Left ventricle myocardium superior (tissue), 1 donor: ENCODE measurements at regions of chr19 and their contacts with region 1.

Region 1: GRCh38 chr19:18214779-18215433 is 11.1 kb upstream of the RAB3A start:
- DNase-seq: no peak
- ATAC-seq: no peak

Region 2: GRCh38 chr19:18017275-18018083 is 197.4 kb before region 1 on chr19:
- intact Hi-C with region 1: no loop called
- DNase-seq: peak; percentile 44
- ATAC-seq: peak; percentile 11

Region 3: DNA sequence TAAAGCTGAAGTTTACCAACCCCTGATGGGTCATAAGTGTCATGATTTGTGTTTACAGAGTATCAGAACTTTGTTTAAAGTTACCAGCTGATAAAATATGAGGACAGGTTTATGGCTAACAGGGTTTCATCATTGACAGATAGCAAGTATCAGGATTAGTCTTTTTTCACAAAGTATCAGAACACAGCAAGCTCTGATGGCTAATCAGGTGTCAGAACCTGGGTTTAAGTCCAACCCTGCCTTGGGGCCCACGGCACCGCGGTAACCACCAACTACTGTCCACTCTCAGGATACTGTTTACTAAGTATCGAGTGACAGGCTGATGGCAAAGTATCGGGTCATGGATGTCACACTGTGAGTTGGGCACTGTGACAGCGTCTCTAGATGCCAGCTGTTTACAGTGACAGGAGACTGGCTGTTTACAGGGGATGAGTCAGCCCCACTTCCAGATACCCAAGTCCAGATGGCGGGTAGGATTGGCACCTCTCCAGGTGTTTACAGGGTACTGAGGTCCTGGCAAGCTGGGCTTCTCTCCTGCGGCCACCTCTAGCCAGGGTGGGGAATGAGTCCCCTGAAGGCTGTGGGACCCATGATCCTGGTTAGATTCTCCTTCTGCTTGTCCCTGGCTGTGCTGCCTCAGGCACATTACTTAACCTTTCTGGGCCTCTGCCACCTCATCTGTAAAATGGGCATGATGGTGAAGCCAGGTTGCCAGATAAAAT is 185.1 kb before region 1 on chr19:
- intact Hi-C with region 1: no loop called
- DNase-seq: no peak
- ATAC-seq: peak; percentile 60

Region 4: GRCh38 chr19:18160971-18161635 is 53.8 kb before region 1 on chr19:
- intact Hi-C with region 1: no loop called
- DNase-seq: peak; percentile 89
- ATAC-seq: peak; percentile 74

Region 5: GRCh38 chr19:18249834-18250233 is 34.9 kb after region 1 on chr19:
- intact Hi-C with region 1: no loop called
- DNase-seq: no peak
- ATAC-seq: no peak

Region 6: DNA sequence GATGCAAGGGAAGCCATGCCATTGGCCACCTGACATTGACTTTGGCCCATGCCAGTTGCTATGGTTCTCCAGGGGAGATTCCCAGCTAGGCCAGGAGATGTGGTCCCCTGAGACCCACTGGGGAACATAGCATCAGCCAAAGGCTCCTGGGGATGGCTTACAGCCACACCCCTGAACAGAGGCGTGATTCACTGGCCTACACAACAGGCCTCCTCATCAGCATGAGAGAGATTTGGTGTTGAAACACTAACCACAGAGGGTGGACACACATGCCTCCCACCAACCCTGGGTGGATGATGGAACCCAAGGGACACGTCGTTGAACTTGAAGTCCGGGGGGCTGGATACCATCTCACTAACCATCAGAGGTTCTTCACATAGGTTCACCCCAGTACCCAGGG is 45.0 kb after region 1 on chr19:
- intact Hi-C with region 1: loop called (anchors 10 kb)
- DNase-seq: no peak
- ATAC-seq: no peak